MCF 10A (cell line): ENCODE measurements at regions of chr16 and their contacts with region 1.

Region 1: DNA sequence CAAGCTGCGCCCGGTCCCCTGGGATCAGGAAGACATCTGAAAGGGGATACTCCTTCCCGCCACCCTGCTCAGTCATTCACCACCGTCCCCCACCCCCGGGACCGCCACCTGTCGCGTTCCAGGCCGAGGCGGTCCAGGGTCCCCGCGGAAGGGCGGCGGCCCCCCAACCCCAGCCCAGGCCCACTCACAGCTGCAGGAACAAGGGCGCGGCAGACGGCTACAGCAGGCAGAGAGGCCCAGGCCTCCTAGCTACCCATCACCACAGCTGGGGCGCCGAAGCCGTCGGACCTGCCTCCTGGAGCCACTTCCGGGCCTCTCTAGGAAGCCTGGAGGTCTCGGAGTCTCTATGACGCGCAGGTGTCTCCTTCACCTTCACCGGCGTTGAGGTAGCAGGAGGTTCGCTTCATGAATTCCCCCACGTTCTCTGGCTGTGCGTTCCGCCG is at the start of gene SDR42E1:
- DNase-seq: peak; percentile 64
- H3K4me3 Mint-ChIP-seq: peak within 1 kb of the TSS; percentile 77
- H3K27ac Mint-ChIP-seq: peak within 1 kb of the TSS; percentile 75
- H3K4me1 Mint-ChIP-seq: peaks cover 8% of the 10 kb centered on the region
- H3K27me3 Mint-ChIP-seq: no peaks in the 10 kb centered on the region
- CTCF ChIP-seq: no peak
- total RNA-seq, gene SDR42E1: 7.8 and 8.4 TPM in 2 replicates

Region 2: DNA sequence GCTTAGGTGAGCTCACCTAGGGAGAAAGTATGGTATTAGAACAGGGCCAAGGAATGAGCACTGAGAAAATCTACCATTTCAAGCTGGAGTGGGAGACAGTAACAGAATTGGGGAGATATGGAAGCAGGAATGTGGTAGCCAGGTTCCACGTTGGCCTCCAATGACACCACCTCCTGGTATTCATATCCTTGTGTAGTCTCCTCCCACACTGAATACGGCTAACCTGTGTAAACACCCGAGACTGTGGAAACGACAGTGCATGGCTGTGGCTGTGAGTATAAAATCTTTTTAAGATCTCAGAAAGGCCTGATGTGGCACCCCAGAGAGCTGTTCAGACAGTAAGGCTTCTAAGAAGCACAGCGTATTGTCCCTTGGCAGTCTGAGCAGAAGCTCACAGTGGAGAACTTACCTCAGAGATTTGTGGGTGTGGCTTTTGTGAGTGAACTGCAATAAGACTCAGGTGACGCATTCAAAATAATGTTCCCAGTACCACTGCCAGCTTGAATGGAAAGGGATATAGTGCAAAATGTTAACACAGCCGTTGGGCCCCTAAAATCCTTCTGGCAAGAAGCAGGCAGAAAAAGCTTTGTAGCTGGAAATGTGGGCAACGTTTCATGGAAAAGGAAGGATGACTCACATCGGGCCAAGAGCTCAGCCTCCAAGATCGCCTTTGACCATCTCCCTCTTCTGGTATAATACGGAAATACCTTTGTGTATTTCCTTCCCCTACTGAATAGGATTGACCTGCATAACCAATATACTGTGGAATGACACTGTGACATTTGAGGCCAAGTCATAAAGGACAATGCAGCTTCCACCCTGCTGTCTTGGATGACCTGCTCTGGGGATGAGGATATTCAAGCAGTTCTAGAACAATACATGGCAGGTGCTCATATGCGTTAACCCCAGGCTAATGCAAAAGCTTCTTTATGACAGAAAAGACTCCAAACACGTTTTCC is 14.3 kb before region 1 on chr16:
- CTCF ChIA-PET with region 1: interaction called, 6 read pairs
- POLR2A ChIA-PET with region 1: interaction called, 10 read pairs
- intact Hi-C with region 1: no loop called
- DNase-seq: peak; percentile 84
- H3K4me3 Mint-ChIP-seq: no peak overlapping the region
- H3K27ac Mint-ChIP-seq: peak overlapping the region; percentile 31
- H3K4me1 Mint-ChIP-seq: peaks cover 25% of the 10 kb centered on the region
- H3K27me3 Mint-ChIP-seq: no peaks in the 10 kb centered on the region
- CTCF ChIP-seq: peak; percentile 44